RWPE1 (cell line): ENCODE measurements at regions of chr7 and their contacts with region 1.

Region 1: GRCh38 chr7:102262546-102262945 is 24.1 kb upstream of the SH2B2 start:
- DNase-seq: no peak
- H3K27ac ChIP-seq: no peak overlapping the region
- CTCF ChIP-seq: no peak

Region 2: GRCh38 chr7:102111061-102111743 is 151.3 kb before region 1 on chr7:
- CTCF ChIA-PET with region 1: no interaction called
- POLR2A ChIA-PET with region 1: interaction called, 12 read pairs
- DNase-seq: no peak
- H3K27ac ChIP-seq: 0 out of 2 replicates have a peak overlapping the region, but pooled peaks have one; percentile 18
- CTCF ChIP-seq: no peak

Region 3: DNA sequence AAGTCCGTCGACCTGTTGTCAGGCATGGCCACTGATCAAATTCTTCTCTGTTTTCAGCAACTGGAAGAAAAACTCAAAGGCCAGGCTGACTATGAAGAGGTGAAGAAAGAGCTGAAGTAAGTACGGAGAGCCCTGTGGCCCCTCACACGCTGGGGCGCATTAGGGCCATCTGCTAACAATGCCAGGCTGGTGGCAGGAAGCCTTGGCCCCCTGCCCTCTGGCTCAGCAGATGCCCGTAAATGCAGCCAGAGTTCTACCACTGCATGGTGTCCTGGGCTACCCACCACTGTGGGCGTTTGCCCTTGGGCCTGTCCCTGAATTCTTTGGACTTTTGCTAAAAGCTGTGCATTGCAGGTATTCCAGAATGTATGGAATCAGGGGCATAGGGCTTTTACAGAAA is 72.8 kb before region 1 on chr7:
- CTCF ChIA-PET with region 1: no interaction called
- POLR2A ChIA-PET with region 1: no interaction called
- DNase-seq: no peak
- H3K27ac ChIP-seq: peak overlapping the region; percentile 18
- CTCF ChIP-seq: no peak